CD8-positive, alpha-beta memory T cell (primary cell): ENCODE measurements at regions of chr3 and their contacts with region 1.

Region 1: DNA sequence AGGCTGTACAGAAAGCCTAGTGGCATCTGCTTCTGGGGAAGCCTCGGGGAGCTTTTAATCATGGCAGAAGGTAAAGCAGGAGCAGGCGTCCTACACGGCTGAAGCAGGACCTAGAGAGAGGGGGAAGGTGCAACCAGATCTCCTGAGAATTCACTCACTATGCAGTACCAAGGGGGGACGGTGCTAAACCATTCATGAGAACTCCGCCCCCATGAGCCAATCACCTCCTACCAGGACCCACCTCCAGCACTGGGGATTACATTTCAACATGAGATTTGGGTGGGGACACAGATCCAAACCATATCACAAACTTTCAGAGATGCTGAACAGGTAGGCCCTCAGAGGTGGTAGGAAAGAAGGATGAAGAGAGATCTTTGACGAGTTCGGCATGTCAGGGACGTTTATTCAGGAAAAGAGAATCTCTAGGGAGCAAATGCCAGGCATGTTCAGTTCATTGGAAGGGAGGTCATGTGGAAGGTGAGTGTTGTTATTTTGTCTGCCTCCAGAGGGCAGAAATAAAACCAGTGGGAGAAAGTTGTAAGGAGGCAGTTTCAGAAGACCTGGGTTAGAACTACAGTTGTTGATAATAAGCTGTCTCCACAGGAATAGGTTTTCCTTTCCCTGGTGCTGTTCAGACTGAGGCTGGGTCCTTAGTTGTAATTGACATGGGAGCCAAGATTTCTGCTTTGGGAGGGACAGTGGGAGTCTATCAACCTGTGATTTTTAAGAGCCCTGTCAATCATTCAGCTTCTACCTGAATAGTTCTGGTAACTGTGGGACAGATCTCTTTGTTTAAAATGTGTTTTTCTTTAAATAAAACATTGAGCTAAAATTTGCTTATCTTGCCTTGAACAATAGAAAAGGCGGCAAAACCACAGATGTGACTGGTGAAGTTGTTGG is 4.3 kb upstream of the FNDC3B start:
- DNase-seq: peak in 2 of 5 donors; percentile 41 to 43
- H3K4me3 ChIP-seq: no peak overlapping the region
- H3K4me3 Mint-ChIP-seq: peak overlapping the region in 1 of 7 donors; percentile 0
- H3K27ac ChIP-seq: no peak overlapping the region
- H3K27ac Mint-ChIP-seq: peak overlapping the region in 1 of 8 donors; percentile 37
- H3K4me1 ChIP-seq: peaks cover 9% of the 10 kb centered on the region
- H3K4me1 Mint-ChIP-seq: peaks cover 17 to 26% (median 19%) of the 10 kb centered on the region in 3 donors
- H3K27me3 ChIP-seq: no peaks in the 10 kb centered on the region
- H3K27me3 Mint-ChIP-seq: peaks cover 5 to 19% of the 10 kb centered on the region in 2 donors

Region 2: DNA sequence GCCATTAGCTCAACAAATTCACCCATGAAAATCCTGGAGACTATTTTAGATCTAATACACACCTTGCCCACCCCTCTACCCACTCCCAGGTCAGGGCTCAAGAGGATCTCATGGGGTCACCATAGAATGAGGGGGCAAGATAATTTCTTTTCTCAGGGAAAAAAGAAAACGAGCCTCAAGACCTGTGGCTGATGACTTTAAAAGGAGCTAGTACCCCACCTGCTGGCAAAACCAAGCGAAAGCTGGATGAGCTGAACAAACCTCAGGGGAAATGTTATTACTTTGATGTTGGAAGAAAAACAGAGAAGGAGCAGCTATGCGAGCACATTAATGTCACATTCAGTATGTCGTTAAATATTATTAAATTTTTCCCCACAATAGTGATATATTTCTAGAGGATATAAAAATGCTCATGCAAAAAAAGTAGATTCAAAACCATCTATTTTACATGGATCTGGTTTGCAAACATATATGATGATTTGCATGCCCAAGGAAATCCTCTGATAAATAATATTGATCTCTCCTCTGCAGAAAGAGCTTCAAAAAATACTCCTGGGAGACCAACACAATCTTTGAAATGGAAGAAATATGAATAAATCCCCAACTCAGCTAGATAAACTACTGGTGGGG is 262.5 kb before region 1 on chr3:
- CTCF ChIA-PET with region 1: no interaction called
- POLR2A ChIA-PET with region 1: no interaction called
- DNase-seq: peak in 4 of 5 donors; percentile 17 to 48 (median 27)
- H3K4me3 ChIP-seq: no peak overlapping the region
- H3K4me3 Mint-ChIP-seq: peak overlapping the region in 1 of 7 donors; percentile 15
- H3K27ac ChIP-seq: no peak overlapping the region
- H3K27ac Mint-ChIP-seq: peak overlapping the region in 1 of 8 donors; percentile 48
- H3K4me1 ChIP-seq: no peaks in the 10 kb centered on the region
- H3K4me1 Mint-ChIP-seq: peaks cover 5 to 16% (median 7%) of the 10 kb centered on the region in 3 donors
- H3K27me3 ChIP-seq: no peaks in the 10 kb centered on the region
- H3K27me3 Mint-ChIP-seq: peaks cover 2 to 20% of the 10 kb centered on the region in 2 donors

Region 3: DNA sequence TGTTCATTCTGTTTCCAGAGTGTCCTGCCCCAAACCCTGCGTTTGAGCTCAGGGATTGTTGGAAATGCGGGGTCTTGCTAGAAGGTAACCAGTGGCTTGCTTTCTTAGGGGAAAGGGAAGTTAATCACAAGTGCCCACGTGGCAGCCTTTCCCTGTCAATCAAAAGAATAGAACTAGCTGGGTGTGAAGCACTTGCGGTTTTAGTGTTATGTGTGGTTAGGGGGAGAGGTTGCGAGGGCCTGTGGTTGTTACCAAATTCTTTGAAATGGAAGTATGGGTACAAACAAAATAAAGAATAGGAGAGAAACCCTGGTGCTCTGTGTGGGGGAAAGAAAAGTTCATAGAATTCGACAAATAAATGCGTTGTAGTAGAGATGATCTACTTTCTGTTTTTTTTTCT is 72.0 kb after region 1 on chr3:
- CTCF ChIA-PET with region 1: interaction called, 10 read pairs
- POLR2A ChIA-PET with region 1: interaction called, 5 read pairs
- DNase-seq: peak; percentile 34 to 87 (median 77)
- H3K4me3 ChIP-seq: peak overlapping the region; percentile 42
- H3K4me3 Mint-ChIP-seq: peak overlapping the region; percentile 69 to 88 (median 80)
- H3K27ac ChIP-seq: peak overlapping the region; percentile 5
- H3K27ac Mint-ChIP-seq: peak overlapping the region; percentile 72 to 96 (median 94)
- H3K4me1 ChIP-seq: peaks cover 78% of the 10 kb centered on the region
- H3K4me1 Mint-ChIP-seq: peaks cover 69 to 84% (median 82%) of the 10 kb centered on the region in 3 donors
- H3K27me3 ChIP-seq: no peaks in the 10 kb centered on the region
- H3K27me3 Mint-ChIP-seq: peaks cover 0 to 2% of the 10 kb centered on the region in 2 donors

Region 4: DNA sequence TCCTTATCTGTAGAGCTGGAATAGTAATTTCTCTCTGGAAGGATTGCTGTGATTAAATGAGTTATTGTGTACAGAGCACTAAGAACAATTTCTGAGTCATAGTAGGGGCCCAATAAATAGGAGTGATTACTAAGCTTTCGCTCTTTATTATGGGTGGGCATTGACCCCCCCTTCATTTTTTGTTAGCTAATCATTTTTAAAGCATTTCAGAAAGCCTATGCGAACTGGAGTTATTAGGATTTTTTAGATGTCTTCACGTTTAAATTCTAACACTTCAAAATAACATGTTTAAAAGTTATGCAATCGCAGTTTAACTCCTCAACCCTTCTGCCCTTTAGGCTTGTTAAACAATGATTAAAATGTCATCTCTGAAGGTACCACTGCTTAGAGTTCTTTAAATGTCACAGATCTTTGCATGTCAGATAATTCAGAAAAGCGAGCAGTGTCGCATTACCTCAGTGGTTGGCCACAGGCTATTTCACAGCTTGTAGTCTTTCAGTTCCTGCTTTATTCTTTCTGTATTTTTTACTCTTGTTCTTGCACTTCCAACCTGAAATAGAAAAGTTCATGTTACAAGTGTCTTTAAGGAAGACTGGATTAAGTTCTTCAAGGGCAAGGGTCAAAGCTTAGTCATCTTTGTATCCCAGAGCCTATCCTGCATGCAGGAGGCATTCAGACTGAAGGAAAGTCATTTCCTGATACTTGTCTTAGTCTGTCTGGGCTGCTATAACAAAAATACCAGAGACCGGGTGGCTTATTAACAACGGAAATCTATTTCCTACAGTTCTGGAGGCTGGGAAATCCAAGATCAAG is 107.2 kb after region 1 on chr3:
- CTCF ChIA-PET with region 1: no interaction called
- POLR2A ChIA-PET with region 1: no interaction called
- DNase-seq: no peak
- H3K4me3 ChIP-seq: no peak overlapping the region
- H3K4me3 Mint-ChIP-seq: no peak overlapping the region
- H3K27ac ChIP-seq: no peak overlapping the region
- H3K27ac Mint-ChIP-seq: no peak overlapping the region
- H3K4me1 ChIP-seq: peaks cover 32% of the 10 kb centered on the region
- H3K4me1 Mint-ChIP-seq: peaks cover 34 to 50% (median 44%) of the 10 kb centered on the region in 3 donors
- H3K27me3 ChIP-seq: no peaks in the 10 kb centered on the region
- H3K27me3 Mint-ChIP-seq: peaks cover 0 to 3% of the 10 kb centered on the region in 2 donors

Region 5: GRCh38 chr3:172332256-172333041 is 297.4 kb after region 1 on chr3:
- CTCF ChIA-PET with region 1: interaction called, 24 read pairs
- POLR2A ChIA-PET with region 1: no interaction called
- DNase-seq: peak; percentile 27 to 70 (median 35)
- H3K4me3 ChIP-seq: no peak overlapping the region
- H3K4me3 Mint-ChIP-seq: no peak overlapping the region
- H3K27ac ChIP-seq: no peak overlapping the region
- H3K27ac Mint-ChIP-seq: peak overlapping the region in 3 of 8 donors; percentile 17 to 47 (median 30)
- H3K4me1 ChIP-seq: no peaks in the 10 kb centered on the region
- H3K4me1 Mint-ChIP-seq: peaks cover 4 to 10% (median 5%) of the 10 kb centered on the region in 3 donors
- H3K27me3 ChIP-seq: no peaks in the 10 kb centered on the region
- H3K27me3 Mint-ChIP-seq: no peaks in the 10 kb centered on the region

Region 6: GRCh38 chr3:172341482-172342059 is 306.5 kb after region 1 on chr3:
- CTCF ChIA-PET with region 1: interaction called, 31 read pairs
- POLR2A ChIA-PET with region 1: no interaction called
- DNase-seq: peak in 2 of 5 donors; percentile 41 to 57
- H3K4me3 ChIP-seq: no peak overlapping the region
- H3K4me3 Mint-ChIP-seq: no peak overlapping the region
- H3K27ac ChIP-seq: no peak overlapping the region
- H3K27ac Mint-ChIP-seq: no peak overlapping the region
- H3K4me1 ChIP-seq: no peaks in the 10 kb centered on the region
- H3K4me1 Mint-ChIP-seq: no peaks in the 10 kb centered on the region
- H3K27me3 ChIP-seq: no peaks in the 10 kb centered on the region
- H3K27me3 Mint-ChIP-seq: no peaks in the 10 kb centered on the region